ENCODE measurements at regions of chr5 and their contacts with region 1.

Region 1: GRCh38 chr5:142748568-142749249 is 21.5 kb upstream of the ARHGAP26 start:
- DNase-seq: peak; percentile 56
- H3K4me3 ChIP-seq: no peak overlapping the region
- H3K27ac ChIP-seq: no peak overlapping the region
- H3K4me1 ChIP-seq: no peaks in the 10 kb centered on the region
- CTCF ChIP-seq: peak; percentile 84

Region 2: DNA sequence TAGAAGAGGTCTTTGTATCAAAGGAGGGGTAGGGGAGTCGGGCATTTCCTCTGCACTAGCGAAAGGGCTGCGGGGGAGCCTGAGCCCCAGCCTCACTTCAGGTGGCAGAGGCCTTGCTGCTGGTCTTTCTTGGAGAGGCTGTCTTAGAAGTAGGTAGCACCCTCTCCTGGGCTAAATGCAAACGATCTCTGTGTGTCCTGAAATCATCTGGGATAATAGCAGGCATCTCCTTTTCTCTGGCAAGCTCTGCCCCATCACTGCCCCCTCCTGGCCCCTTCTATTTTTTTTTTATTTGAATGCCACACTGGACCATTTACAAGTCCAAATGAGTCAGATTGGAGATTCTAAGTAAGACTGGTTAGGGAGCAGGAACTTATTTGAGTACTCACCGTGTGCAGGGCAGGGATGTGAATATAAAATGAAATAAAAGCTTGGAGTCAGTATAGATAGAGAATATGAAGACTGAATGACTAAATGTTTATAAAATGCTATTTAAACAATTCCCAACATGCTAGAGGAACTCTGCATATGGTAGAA is 199.9 kb before region 1 on chr5:
- CTCF ChIA-PET with region 1: no interaction called
- POLR2A ChIA-PET with region 1: no interaction called
- intact Hi-C with region 1: no loop called
- DNase-seq: peak; percentile 20
- H3K4me3 ChIP-seq: no peak overlapping the region
- H3K27ac ChIP-seq: no peak overlapping the region
- H3K4me1 ChIP-seq: no peaks in the 10 kb centered on the region
- CTCF ChIP-seq: peak; percentile 76

Region 3: DNA sequence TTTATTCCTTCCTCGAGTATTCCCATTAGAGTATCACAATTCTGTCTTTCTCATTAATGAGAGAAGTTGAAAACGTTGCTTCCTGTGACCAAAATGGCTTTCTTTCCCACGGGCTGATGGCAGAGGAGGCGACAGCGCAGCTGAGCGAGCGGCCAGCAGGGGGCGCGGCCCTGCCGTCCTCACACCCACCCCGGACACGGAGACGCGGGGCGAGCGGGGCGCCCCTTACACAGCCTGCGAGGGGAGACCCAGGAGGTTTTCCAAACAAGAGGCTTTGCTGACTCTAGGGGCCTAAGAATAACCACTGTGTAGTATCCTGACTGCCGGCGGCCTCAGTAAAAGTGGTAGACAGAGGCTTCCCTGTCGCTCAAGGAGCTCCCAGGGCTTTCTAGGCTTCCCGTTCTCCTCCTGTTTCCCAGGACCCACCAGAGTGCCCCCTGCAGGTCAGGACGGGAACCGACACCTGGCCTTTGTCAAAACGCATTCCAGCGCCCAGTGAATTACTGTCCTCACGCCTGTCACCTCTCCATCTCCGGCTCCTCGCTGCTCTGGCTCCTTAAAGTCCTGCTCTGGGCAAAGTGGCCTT is 35.5 kb before region 1 on chr5:
- CTCF ChIA-PET with region 1: no interaction called
- POLR2A ChIA-PET with region 1: no interaction called
- intact Hi-C with region 1: no loop called
- DNase-seq: peak; percentile 90
- H3K4me3 ChIP-seq: peak overlapping the region; percentile 68
- H3K27ac ChIP-seq: no peak overlapping the region
- H3K4me1 ChIP-seq: peaks cover 5% of the 10 kb centered on the region
- CTCF ChIP-seq: peak; percentile 100

Region 4: DNA sequence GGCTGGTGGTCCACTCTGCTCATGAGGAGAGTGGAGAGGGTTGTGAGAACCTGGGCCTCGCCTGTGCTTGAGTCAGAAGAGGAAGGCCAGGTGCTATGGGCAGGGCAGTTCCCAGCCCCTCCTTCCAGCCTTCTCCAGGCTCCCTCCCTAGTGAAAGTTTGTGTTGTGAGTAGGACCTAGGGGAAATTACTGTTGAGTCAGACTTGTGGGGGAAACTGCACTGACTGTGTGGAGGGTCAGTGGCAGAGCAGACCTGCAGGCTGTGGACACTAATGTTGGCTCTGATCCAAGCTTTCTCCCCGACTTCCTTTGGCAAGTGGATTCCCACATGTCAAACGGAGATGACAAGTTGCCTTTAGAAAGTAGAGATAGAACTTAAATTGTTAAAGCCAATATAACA is 124.1 kb after region 1 on chr5:
- CTCF ChIA-PET with region 1: no interaction called
- POLR2A ChIA-PET with region 1: no interaction called
- intact Hi-C with region 1: loop called (anchors 1 kb)
- DNase-seq: no peak
- H3K4me3 ChIP-seq: no peak overlapping the region
- H3K27ac ChIP-seq: no peak overlapping the region
- H3K4me1 ChIP-seq: no peaks in the 10 kb centered on the region
- CTCF ChIP-seq: no peak

Region 5: DNA sequence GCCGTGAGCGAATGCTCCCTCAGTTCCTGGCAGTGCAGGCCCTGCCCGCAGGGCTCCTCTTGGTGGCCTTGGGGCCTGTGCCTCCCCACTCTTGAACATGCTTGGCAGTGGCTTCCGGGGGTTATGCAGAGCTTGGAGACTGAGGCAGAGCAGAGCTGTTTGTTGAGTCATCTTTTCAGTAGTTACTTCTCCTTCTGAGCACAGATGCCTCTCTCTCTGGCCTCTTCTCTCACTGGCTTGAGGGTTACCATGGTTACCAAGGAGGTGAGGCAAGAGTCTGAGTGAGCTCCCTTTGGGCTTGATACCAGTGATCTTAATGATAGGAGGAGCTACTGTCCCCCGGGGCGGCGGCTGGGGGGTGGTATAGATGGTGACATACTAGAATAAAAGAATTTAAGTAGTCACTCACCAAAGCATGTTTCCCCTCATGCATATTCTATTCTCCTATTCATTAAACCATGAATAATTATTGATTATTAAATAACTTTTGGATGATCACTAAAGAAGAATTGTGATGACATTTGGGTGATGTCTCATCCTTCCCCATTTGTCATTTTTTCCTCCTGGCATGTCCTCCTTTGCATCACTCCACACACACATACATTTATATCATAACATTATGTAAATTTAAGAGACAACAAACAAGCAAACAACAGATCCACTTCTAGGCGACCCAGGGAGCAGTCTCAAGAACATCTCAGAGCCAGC is 132.5 kb after region 1 on chr5:
- CTCF ChIA-PET with region 1: interaction called, 7 read pairs
- POLR2A ChIA-PET with region 1: interaction called, 4 read pairs
- intact Hi-C with region 1: loop called (anchors 1 kb)
- DNase-seq: peak; percentile 23
- H3K4me3 ChIP-seq: no peak overlapping the region
- H3K27ac ChIP-seq: no peak overlapping the region
- H3K4me1 ChIP-seq: no peaks in the 10 kb centered on the region
- CTCF ChIP-seq: no peak

Measured in OCI-LY7 (cell line).